Right cardiac atrium (tissue), 5 donors: ENCODE measurements at regions of chr9 and their contacts with region 1.

Region 1: DNA sequence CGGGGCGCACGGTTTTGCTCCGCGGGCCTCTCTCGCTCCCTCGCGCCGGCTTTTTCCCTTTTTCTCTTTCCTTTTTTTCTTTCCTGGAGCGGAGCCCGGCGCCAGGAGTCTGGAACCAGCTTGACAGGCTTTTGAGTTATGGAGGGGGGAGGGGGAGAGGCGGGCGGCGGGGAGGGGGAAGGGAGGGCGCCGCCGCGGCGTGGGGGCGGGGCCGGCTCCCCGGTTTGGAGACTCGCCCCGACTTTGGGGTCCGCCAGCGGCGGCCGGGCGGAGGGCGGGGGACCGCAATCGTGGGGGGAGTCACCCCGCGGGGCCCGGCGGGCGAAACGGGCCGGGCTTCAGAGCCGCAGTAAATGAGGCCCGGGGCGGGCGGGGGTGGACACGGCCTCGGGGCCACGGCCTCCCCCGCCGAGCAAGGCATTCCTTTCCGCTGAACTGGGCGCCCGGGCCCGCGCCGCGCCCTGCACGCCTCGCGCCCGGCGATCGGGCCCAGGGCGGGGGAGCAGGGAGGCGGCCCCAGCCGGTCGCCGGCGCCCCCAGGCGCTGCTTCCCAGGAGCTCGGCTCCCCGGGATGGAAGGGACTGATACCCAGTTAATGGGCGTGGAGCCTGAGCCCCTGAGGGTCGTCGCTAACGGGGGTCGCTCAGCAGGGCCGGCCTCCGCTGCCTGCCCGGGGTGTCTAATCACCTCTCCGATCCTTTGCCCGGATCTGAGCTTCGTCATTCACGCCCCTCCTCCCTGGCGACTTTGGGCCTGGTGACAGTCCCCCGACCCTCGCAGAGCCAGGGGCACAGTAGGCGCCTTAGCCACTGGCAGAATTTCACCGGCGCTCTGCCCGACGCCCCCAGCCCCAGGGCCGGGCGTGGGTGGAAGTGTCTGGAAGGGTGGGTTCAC is 138.1 kb downstream of the C9orf50 start:
- DNase-seq: peak; percentile 90 to 95 (median 95)
- ATAC-seq: peak; percentile 72 to 73
- H3K4me3 ChIP-seq: peak overlapping the region; percentile 77
- H3K27ac ChIP-seq: peak overlapping the region; percentile 100
- H3K4me1 ChIP-seq: peaks cover 23% of the 10 kb centered on the region
- H3K27me3 ChIP-seq: no peaks in the 10 kb centered on the region

Region 2: GRCh38 chr9:129139993-129140396 is 342.8 kb before region 1 on chr9:
- intact Hi-C with region 1: loop called in 1 of 4 experiments (anchors 10 kb)
- DNase-seq: peak; percentile 94 to 96 (median 95)
- ATAC-seq: peak; percentile 79 to 81
- H3K4me3 ChIP-seq: peak overlapping the region; percentile 3
- H3K27ac ChIP-seq: peak overlapping the region; percentile 96
- H3K4me1 ChIP-seq: peaks cover 26% of the 10 kb centered on the region
- H3K27me3 ChIP-seq: no peaks in the 10 kb centered on the region

Region 3: DNA sequence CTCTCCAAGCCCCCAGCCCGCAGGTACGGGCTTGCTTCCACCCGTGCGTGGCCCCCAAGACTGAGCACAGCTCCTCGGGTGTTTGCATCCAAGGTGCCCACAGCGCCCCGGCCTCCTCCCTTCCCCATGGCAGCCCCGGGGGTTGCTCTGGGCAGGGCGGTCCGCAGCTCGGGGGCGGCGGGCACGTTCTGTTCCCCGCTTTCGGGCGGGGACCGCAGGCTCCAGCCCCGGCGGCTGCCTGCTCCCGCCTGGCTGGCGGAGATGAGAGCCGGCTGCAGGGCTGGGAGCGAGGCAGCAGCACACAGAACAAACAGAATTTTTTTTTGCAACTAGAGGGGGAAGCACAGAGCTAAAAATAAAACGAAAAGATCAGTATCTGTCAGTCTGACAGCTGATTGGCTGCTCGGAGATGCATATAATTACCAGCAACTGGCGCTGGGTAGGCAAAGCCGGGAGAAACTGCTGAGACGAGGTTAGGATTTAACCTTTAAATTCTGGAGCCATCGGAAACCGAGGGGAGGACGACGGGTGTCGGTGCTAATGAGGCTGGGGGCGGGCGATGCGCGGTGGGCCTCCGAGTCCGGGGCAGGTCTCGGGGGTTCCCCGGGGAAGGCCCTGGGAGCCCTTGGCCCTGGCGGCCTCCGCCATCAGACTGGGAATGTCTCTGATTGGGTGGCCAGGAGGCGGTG is 162.0 kb before region 1 on chr9:
- intact Hi-C with region 1: loop called in 1 of 4 experiments (anchors 10 kb)
- DNase-seq: peak; percentile 67 to 91 (median 88)
- ATAC-seq: peak; percentile 81
- H3K4me3 ChIP-seq: peak overlapping the region; percentile 17
- H3K27ac ChIP-seq: peak overlapping the region; percentile 88
- H3K4me1 ChIP-seq: peaks cover 5% of the 10 kb centered on the region
- H3K27me3 ChIP-seq: no peaks in the 10 kb centered on the region

Region 4: GRCh38 chr9:129333953-129334724 is 148.6 kb before region 1 on chr9:
- intact Hi-C with region 1: loop called in 3 of 4 experiments (anchors 10 kb)
- DNase-seq: peak; percentile 94 to 98 (median 97)
- ATAC-seq: peak; percentile 93 to 94
- H3K4me3 ChIP-seq: peak overlapping the region; percentile 11
- H3K27ac ChIP-seq: peak overlapping the region; percentile 85
- H3K4me1 ChIP-seq: peaks cover 14% of the 10 kb centered on the region
- H3K27me3 ChIP-seq: no peaks in the 10 kb centered on the region

Region 5: DNA sequence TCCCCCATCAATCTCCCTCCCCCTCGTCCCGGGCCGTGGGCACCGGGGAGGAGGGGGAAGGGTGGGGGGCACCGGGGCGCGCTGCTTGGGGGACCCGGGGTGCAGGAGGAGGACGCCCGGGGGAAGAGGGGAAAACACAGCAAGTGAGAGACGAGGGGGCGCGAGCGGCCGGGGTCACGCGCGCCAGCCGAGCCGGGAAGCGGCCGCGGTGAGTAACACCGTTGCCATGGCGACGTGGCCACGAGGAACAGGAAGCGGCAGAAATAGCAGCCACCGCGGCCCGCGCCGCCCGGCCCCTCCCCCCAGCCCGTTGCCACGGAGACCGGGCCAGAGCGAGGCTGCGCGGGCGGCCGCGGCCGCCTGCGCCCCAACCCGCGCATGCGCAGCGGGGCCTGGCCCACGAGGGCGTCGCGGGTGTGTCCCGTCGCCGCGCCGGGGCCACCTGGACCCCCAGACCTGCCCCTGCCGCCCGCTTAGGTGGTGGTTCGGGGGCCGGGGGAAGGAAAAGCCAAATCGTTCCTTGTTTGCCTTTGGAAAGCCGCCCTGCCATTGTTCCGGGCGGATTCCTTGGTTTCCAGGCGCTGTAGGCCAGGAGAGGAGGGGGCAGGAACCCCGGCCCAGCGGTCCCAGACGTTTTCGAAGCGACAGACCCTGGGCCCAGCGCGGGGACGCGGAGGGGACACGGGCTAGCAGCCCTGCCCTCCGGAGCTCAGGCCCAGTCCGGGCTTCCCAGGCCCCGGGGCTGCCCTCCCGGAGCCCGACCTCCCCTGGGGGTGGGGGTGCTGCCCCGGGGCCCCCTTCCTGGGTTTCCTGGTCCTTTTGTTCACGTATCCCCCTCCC is 69.0 kb before region 1 on chr9:
- intact Hi-C with region 1: loop called in 2 of 4 experiments (anchors 5 to 10 kb)
- DNase-seq: peak; percentile 100
- ATAC-seq: peak; percentile 89 to 90
- H3K4me3 ChIP-seq: peak overlapping the region; percentile 66
- H3K27ac ChIP-seq: peak overlapping the region; percentile 97
- H3K4me1 ChIP-seq: peaks cover 8% of the 10 kb centered on the region
- H3K27me3 ChIP-seq: no peaks in the 10 kb centered on the region